ENCODE measurements at regions of chr3 and their contacts with region 1.

Region 1: GRCh38 chr3:77254967-77255831 is 215.3 kb downstream of the ROBO2 start:
- DNase-seq: peak; percentile 35
- ATAC-seq: peak; percentile 75
- H3K4me3 ChIP-seq: no peak overlapping the region
- H3K27ac ChIP-seq: no peak overlapping the region
- H3K4me1 ChIP-seq: no peaks in the 10 kb centered on the region
- H3K27me3 ChIP-seq: no peaks in the 10 kb centered on the region
- CTCF ChIP-seq: peak; percentile 68

Region 2: GRCh38 chr3:77039606-77040171 is 215.5 kb before region 1 on chr3 and contains the start of gene ROBO2:
- CTCF ChIA-PET with region 1: interaction called, 3 read pairs
- POLR2A ChIA-PET with region 1: no interaction called
- in situ Hi-C with region 1: no loop called
- intact Hi-C with region 1: loop called (anchors 1 kb)
- DNase-seq: no peak
- ATAC-seq: peak; percentile 78
- H3K4me3 ChIP-seq: peak within 1 kb of the TSS; percentile 37 to 53
- H3K27ac ChIP-seq: no peak within 1 kb of the TSS
- H3K4me1 ChIP-seq: no peaks in the 10 kb centered on the region
- H3K27me3 ChIP-seq: no peaks in the 10 kb centered on the region
- CTCF ChIP-seq: no peak
- total RNA-seq, gene ROBO2: 1.3 TPM

Measured in Panc1 (cell line).